AG04449 (cell line): ENCODE measurements at regions of chr15 and their contacts with region 1.

Region 1: GRCh38 chr15:68672781-68673205 is 94.0 kb downstream of the CORO2B start:
- DNase-seq: no peak
- H3K4me3 ChIP-seq: no peak overlapping the region
- CTCF ChIP-seq: peak; percentile 49

Region 2: GRCh38 chr15:67884514-67885487 is 788.0 kb before region 1 on chr15:
- CTCF ChIA-PET with region 1: no interaction called
- POLR2A ChIA-PET with region 1: no interaction called
- DNase-seq: no peak
- H3K4me3 ChIP-seq: peak overlapping the region; percentile 57
- CTCF ChIP-seq: no peak

Region 3: DNA sequence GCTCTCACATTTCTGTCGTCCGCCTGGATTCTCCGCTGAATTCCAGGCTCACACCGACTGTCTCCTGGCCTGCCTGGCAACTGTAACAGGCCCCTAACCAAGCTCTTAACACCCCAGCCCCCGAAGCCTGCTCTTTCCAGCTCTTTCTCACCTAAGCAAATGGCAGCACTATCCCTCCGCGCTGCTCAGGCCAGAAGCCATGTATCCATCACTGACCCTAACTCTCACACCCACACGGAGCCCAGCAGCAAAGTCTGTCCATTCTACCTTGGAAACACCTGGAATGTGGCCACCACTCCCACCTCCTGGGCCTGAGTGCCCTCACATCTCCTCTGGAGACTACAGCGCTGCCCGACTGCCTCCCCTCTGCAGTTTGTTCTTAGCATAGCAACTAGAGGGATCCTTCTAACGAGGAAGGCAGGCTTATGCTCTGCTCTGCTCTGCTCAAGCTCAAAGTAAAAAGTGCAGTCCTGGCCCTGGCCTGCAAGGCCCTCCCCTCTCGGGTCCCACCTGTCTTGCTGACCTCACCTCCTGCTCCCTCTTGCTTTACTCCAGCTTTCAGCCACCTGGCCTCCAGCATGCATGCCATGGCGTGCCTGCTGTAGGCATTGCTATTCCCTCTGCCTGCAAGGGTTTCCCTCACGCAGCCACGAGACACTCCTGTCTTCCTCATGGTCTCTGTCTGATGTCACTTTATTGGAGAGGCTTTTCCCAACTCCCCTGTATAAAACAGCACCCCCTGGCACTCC is 368.0 kb before region 1 on chr15:
- CTCF ChIA-PET with region 1: interaction called, 22 read pairs
- POLR2A ChIA-PET with region 1: interaction called, 3 read pairs
- DNase-seq: no peak
- H3K4me3 ChIP-seq: no peak overlapping the region
- CTCF ChIP-seq: no peak

Region 4: GRCh38 chr15:68578174-68578979 is 94.4 kb before region 1 on chr15:
- CTCF ChIA-PET with region 1: interaction called, 408 read pairs
- POLR2A ChIA-PET with region 1: no interaction called
- DNase-seq: no peak
- H3K4me3 ChIP-seq: peak overlapping the region; percentile 58
- CTCF ChIP-seq: peak; percentile 66

Region 5: GRCh38 chr15:68637767-68638404 is 34.9 kb before region 1 on chr15:
- CTCF ChIA-PET with region 1: interaction called, 16 read pairs
- POLR2A ChIA-PET with region 1: no interaction called
- DNase-seq: no peak
- H3K4me3 ChIP-seq: no peak overlapping the region
- CTCF ChIP-seq: no peak

Region 6: DNA sequence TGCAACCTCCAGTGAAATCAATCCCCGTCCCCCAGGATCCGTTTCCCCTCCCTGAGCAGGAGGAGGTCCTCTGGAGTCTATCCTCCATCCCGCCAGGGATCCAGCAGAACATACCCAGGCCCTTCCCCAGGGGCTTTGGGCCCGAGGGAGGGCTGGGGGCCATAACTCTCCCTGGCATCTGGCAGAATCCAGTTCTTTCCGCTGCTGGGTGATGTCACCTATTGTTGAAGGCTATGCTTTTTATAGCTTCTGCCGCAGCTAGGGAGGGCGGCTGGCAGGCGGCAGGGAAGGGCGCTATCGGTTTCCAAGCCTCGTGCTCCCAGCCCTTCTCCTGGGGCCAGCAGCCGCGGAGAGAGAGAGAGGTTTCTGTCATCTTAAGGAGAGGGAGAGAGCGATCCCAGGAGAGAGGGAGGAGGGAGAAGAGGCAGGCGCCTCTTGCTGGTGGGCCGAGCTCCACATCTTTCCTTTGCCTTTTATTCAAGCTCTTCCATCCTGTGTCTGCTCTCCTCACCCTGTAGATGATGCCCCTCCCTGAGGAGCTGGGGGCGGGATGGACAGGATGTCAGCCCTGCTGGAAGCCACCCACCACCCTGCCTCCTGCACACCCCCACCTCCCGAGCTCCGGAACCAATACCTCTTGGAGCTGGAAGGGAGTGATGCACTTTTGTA is 27.8 kb after region 1 on chr15:
- CTCF ChIA-PET with region 1: interaction called, 13 read pairs
- POLR2A ChIA-PET with region 1: no interaction called
- DNase-seq: no peak
- H3K4me3 ChIP-seq: peak overlapping the region; percentile 30
- CTCF ChIP-seq: no peak